Heart left ventricle (tissue), 16 donors: ENCODE measurements at regions of chr2 and their contacts with region 1.

Region 1: GRCh38 chr2:205680067-205680466 is 2.2 kb upstream of the NRP2 start:
- DNase-seq: peak in 3 of 5 donors; percentile 42 to 63 (median 49)
- ATAC-seq: peak in 3 of 4 donors; percentile 38 to 61 (median 57)
- H3K4me3 ChIP-seq: no peak overlapping the region
- H3K27ac ChIP-seq: peak overlapping the region in 1 of 12 donors; percentile 93
- H3K4me1 ChIP-seq: peaks cover 0 to 33% (median 16%) of the 10 kb centered on the region in 12 donors
- H3K27me3 ChIP-seq: peaks cover 0 to 33% (median 7%) of the 10 kb centered on the region in 9 donors
- CTCF ChIP-seq: peak; percentile 40 to 73 (median 66)
- POLR2A ChIP-seq: no peak

Region 2: GRCh38 chr2:204145263-204145751 is 1534.8 kb before region 1 on chr2:
- intact Hi-C with region 1: loop called in 1 of 10 experiments (anchors 5 kb)
- DNase-seq: peak; percentile 72 to 82 (median 75)
- ATAC-seq: peak; percentile 84 to 99 (median 95)
- H3K4me3 ChIP-seq: peak overlapping the region in 11 of 12 donors; percentile 25 to 61 (median 47)
- H3K27ac ChIP-seq: peak overlapping the region in 9 of 12 donors; percentile 3 to 67 (median 46)
- H3K4me1 ChIP-seq: peaks cover 0 to 15% (median 1%) of the 10 kb centered on the region in 12 donors
- H3K27me3 ChIP-seq: peaks cover 0 to 4% (median 0%) of the 10 kb centered on the region in 9 donors
- CTCF ChIP-seq: peak; percentile 89 to 99 (median 96)
- POLR2A ChIP-seq: no peak

Region 3: GRCh38 chr2:204325468-204325867 is 1354.6 kb before region 1 on chr2:
- intact Hi-C with region 1: loop called in 9 of 10 experiments (anchors 2 to 5 kb)
- DNase-seq: peak in 4 of 5 donors; percentile 49 to 66 (median 56)
- ATAC-seq: peak; percentile 28 to 70 (median 46)
- H3K4me3 ChIP-seq: no peak overlapping the region
- H3K27ac ChIP-seq: no peak overlapping the region
- H3K4me1 ChIP-seq: peaks cover 0 to 18% (median 7%) of the 10 kb centered on the region in 12 donors
- H3K27me3 ChIP-seq: no peaks in the 10 kb centered on the region
- CTCF ChIP-seq: peak; percentile 76 to 93 (median 88)
- POLR2A ChIP-seq: no peak

Region 4: GRCh38 chr2:204871231-204871953 is 808.7 kb before region 1 on chr2:
- intact Hi-C with region 1: loop called in 8 of 10 experiments (anchors 5 to 10 kb)
- DNase-seq: no peak
- ATAC-seq: peak in 1 of 4 donors; percentile 59
- H3K4me3 ChIP-seq: no peak overlapping the region
- H3K27ac ChIP-seq: peak overlapping the region in 1 of 12 donors; percentile 7
- H3K4me1 ChIP-seq: peaks cover 0 to 26% (median 15%) of the 10 kb centered on the region in 12 donors
- H3K27me3 ChIP-seq: no peaks in the 10 kb centered on the region
- CTCF ChIP-seq: peak in 11 of 12 donors; percentile 11 to 56 (median 38)
- POLR2A ChIP-seq: no peak

Region 5: DNA sequence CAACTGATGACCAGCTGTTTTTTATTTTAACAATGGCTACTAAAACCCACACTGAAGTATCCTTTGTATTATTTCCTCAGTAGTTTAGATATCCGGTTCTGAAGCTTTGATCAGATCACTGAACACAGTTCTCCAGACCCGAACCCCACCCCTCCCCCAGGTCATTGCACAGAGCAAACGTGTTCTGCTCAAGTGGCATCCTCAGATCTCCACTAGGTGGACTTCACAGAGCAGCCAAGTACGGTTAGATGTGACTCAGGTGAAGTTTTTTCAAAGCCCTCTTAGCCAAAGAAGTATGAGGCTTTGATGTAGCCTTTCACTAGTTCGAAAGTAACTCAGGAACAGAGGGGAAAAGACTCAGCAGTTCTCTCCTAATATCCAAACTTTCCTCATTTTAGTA is 140.5 kb before region 1 on chr2:
- intact Hi-C with region 1: loop called in 1 of 10 experiments (anchors 10 kb)
- DNase-seq: no peak
- ATAC-seq: no peak
- H3K4me3 ChIP-seq: no peak overlapping the region
- H3K27ac ChIP-seq: no peak overlapping the region
- H3K4me1 ChIP-seq: peaks cover 0 to 26% (median 2%) of the 10 kb centered on the region in 12 donors
- H3K27me3 ChIP-seq: no peaks in the 10 kb centered on the region
- CTCF ChIP-seq: peak in 1 of 12 donors; percentile 9
- POLR2A ChIP-seq: no peak

Region 6: DNA sequence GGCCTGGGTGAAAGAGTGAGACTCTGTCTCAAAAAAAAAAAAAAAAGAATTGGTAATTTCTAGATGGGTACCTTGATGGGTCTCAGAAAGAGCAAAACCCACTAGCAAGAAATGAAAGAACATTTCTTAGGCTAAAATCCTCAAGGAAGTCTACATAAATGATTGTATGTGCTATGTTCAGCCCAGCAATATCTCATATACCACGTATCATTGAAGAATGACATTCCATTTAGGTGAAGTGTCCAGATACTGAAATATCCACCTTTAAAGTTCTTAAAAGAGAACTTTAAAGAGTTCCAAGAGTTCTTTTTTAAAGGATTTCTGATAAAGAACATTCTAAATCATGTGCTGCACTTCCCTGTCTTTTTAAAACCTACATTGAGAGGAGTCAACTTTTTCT is 21.4 kb after region 1 on chr2:
- intact Hi-C with region 1: no loop called
- DNase-seq: no peak
- ATAC-seq: no peak
- H3K4me3 ChIP-seq: no peak overlapping the region
- H3K27ac ChIP-seq: peak overlapping the region in 5 of 12 donors; percentile 19 to 93 (median 26)
- H3K4me1 ChIP-seq: peaks cover 0 to 87% (median 43%) of the 10 kb centered on the region in 12 donors
- H3K27me3 ChIP-seq: no peaks in the 10 kb centered on the region
- CTCF ChIP-seq: no peak
- POLR2A ChIP-seq: no peak

Region 7: DNA sequence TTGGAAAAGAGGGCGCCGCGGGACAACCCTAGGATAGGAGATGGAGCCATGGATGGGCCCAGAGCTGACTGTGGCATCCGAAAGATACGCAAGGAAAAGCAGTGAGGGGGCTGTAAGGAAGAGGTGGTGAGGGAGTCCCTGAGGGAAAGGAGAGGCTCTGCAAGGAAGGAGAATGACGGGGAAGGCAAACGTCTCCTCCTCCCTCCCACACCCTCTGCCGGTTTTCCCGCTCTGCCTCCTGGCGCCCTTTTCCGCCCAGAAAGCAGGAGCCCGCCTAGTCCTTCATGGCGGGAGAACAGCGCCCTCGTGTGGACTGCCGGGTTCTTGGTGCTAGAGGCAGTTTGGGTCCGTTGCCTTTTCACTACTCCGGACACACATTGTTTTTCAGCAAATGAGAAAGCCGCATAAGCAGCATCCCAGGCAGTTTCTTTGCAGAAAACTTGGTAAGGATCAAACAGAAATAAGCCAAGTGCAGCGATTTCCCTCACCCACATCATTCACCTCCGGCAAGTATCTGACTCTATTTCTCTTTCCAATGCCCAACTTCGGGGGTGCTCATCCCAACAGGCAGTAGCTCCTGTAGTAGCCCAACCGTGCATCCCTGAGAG is 205.5 kb after region 1 on chr2:
- intact Hi-C with region 1: loop called in 1 of 10 experiments (anchors 10 kb)
- DNase-seq: peak; percentile 75 to 93 (median 86)
- ATAC-seq: peak; percentile 75 to 96 (median 88)
- H3K4me3 ChIP-seq: no peak overlapping the region
- H3K27ac ChIP-seq: peak overlapping the region in 1 of 12 donors; percentile 40
- H3K4me1 ChIP-seq: no peaks in the 10 kb centered on the region
- H3K27me3 ChIP-seq: no peaks in the 10 kb centered on the region
- CTCF ChIP-seq: peak; percentile 80 to 92 (median 85)
- POLR2A ChIP-seq: no peak